ENCODE measurements at regions of chr22 and their contacts with region 1.

Region 1: DNA sequence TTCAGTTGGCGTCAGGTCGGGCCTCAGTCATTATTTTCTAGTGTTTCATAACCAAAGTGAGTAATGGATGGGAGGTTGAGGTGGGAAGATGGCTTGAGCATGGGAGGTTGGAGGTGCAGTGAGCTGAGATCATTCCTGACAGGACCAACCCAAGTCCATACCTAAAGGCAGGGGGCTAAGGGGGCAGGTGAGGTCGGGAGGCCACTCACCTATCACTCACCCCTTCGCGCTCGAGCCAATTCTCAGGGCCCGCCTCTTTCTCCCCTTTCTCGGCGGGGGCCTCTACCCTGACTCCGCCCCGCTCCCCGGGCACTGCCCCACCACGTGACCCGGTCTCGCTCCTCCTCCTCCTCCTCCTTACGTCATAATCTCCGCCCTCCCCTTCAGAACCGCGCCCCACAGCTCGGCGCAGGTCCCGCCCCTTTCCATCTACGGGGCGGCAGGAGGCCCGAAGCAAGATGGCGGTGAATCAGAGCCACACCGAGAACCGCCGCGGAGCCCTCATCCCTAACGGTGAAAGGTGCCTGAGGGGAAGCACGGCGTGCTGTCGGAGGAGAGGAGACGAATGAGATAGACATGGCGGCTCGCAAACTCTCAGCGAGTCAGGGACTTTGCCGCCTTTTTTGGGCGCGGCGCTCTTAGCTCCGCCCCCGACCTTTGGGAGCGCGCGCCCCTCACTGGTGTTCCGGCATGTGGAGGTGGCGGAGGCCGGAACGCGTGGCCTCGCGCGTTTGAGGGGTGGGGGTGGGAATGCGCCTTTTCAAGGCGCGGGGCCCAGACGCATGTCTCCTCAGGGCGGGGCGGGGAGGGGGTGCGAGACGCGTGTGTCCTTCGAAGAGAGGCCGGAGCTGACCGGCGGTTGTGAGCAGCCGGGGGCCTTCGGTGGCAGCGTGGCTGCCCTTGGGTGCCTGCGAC is at the start of gene WBP2NL:
- DNase-seq: peak; percentile 77 to 94 (median 88)
- ATAC-seq: peak; percentile 95
- H3K4me3 ChIP-seq: peak within 1 kb of the TSS; percentile 73
- H3K4me3 Mint-ChIP-seq: peak within 1 kb of the TSS; percentile 93
- H3K27ac ChIP-seq: peak within 1 kb of the TSS in 1 of 2 donors; percentile 61
- H3K27ac Mint-ChIP-seq: peak within 1 kb of the TSS; percentile 73
- H3K4me1 ChIP-seq: peaks cover 23% of the 10 kb centered on the region
- H3K4me1 Mint-ChIP-seq: peaks cover 23% of the 10 kb centered on the region
- H3K27me3 ChIP-seq: no peaks in the 10 kb centered on the region
- H3K27me3 Mint-ChIP-seq: no peaks in the 10 kb centered on the region
- CTCF ChIP-seq: no peak
- total RNA-seq, gene WBP2NL: 0.38 to 1.7 TPM

Region 2: DNA sequence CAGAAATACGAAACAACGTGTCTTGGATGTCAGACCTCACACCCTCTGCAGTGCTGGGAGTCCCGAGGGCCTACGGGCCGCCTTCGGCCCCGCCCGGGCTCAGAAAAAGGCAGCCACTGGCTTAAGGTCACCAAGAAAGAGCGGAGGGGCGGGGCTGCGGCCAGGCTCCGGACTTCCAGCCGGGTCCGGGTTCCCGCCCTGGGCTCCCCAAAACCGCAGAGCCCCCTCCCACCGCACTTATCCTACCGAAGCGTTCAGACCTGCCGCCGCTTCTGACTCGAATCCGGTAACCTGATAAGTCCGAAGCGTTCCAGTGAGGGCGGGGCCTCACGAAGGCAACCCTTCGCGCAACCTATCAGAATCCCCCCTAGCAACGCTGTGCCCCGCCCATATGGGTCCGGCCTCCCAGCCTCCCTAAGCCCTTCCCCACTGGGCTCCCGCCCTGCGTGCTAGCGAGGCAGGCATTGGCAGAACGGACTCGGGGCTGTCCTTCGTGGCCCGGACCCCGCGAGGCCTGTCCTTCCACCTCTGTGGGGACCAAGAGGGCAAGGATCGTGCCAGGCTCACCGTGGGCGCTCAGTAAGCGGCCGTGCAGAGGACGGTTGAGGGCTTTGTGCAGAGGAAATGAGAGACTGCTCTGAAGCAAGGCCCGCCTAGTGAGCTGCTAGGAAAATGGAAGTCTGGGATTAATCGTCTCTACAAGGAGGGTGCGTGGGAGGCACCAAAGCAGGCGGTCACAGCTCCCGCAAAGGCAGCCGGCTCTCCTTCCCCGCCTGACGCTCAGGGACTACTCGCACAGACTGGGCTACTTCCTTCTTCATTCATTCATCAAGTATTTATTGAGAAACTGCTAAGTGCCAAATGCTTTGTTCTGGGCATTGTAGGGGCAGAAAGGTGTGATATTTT is 72.2 kb after region 1 on chr22 and contains the start of gene NAGA:
- CTCF ChIA-PET with region 1: no interaction called
- POLR2A ChIA-PET with region 1: interaction called, 3 read pairs
- intact Hi-C with region 1: loop called in 1 of 2 experiments (anchors 5 kb)
- DNase-seq: peak; percentile 75 to 96 (median 86)
- ATAC-seq: peak; percentile 98
- H3K4me3 ChIP-seq: peak within 1 kb of the TSS; percentile 84
- H3K4me3 Mint-ChIP-seq: peak within 1 kb of the TSS; percentile 95
- H3K27ac ChIP-seq: peak within 1 kb of the TSS; percentile 74 to 76
- H3K27ac Mint-ChIP-seq: peak within 1 kb of the TSS; percentile 95
- H3K4me1 ChIP-seq: peaks cover 55% of the 10 kb centered on the region
- H3K4me1 Mint-ChIP-seq: peaks cover 59% of the 10 kb centered on the region
- H3K27me3 ChIP-seq: no peaks in the 10 kb centered on the region
- H3K27me3 Mint-ChIP-seq: no peaks in the 10 kb centered on the region
- CTCF ChIP-seq: no peak
- total RNA-seq, gene NAGA: 2.6 to 3.2 TPM

Region 3: GRCh38 chr22:42116848-42117424 is 118.3 kb after region 1 on chr22:
- CTCF ChIA-PET with region 1: no interaction called
- POLR2A ChIA-PET with region 1: no interaction called
- intact Hi-C with region 1: loop called in 1 of 2 experiments (anchors 2 kb)
- DNase-seq: no peak
- ATAC-seq: no peak
- H3K4me3 ChIP-seq: no peak overlapping the region
- H3K4me3 Mint-ChIP-seq: no peak overlapping the region
- H3K27ac ChIP-seq: no peak overlapping the region
- H3K27ac Mint-ChIP-seq: no peak overlapping the region
- H3K4me1 ChIP-seq: peaks cover 23% of the 10 kb centered on the region
- H3K4me1 Mint-ChIP-seq: peaks cover 43% of the 10 kb centered on the region
- H3K27me3 ChIP-seq: no peaks in the 10 kb centered on the region
- H3K27me3 Mint-ChIP-seq: no peaks in the 10 kb centered on the region
- CTCF ChIP-seq: no peak

Measured in CD4-positive, alpha-beta T cell (primary cell).